Activated CD8-positive, alpha-beta T cell treated with anti-CD3 and anti-CD28 coated beads, Interleukin-2, amount 10 ng/mL, durations not matched to agents 7 days and 5 days (primary cell): ENCODE measurements at regions of chr7 and their contacts with region 1.

Region 1: GRCh38 chr7:21767300-21767900 is 178.3 kb downstream of the CDCA7L start:
- DNase-seq: peak; percentile 41
- ATAC-seq: no peak
- H3K4me3 Mint-ChIP-seq: no peak overlapping the region
- H3K27ac Mint-ChIP-seq: no peak overlapping the region
- H3K4me1 Mint-ChIP-seq: peaks cover 6% of the 10 kb centered on the region
- H3K27me3 Mint-ChIP-seq: peaks cover 12% of the 10 kb centered on the region

Region 2: GRCh38 chr7:21253740-21254687 is 513.4 kb before region 1 on chr7:
- CTCF ChIA-PET with region 1: interaction called, 23 read pairs
- POLR2A ChIA-PET with region 1: no interaction called
- DNase-seq: peak; percentile 65
- ATAC-seq: peak; percentile 86
- H3K4me3 Mint-ChIP-seq: peak overlapping the region; percentile 52
- H3K27ac Mint-ChIP-seq: no peak overlapping the region
- H3K4me1 Mint-ChIP-seq: peaks cover 18% of the 10 kb centered on the region
- H3K27me3 Mint-ChIP-seq: peaks cover 44% of the 10 kb centered on the region